Aorta (tissue), 5 donors: ENCODE measurements at regions of chr1 and their contacts with region 1.

Region 1: GRCh38 chr1:78114034-78114956 is 68.5 kb downstream of the GIPC2 start:
- DNase-seq: no peak
- ATAC-seq: peak; percentile 84
- H3K4me3 ChIP-seq: no peak overlapping the region
- H3K27ac ChIP-seq: no peak overlapping the region
- H3K4me1 ChIP-seq: peaks cover 0 to 2% of the 10 kb centered on the region in 2 donors
- H3K27me3 ChIP-seq: no peaks in the 10 kb centered on the region

Region 2: DNA sequence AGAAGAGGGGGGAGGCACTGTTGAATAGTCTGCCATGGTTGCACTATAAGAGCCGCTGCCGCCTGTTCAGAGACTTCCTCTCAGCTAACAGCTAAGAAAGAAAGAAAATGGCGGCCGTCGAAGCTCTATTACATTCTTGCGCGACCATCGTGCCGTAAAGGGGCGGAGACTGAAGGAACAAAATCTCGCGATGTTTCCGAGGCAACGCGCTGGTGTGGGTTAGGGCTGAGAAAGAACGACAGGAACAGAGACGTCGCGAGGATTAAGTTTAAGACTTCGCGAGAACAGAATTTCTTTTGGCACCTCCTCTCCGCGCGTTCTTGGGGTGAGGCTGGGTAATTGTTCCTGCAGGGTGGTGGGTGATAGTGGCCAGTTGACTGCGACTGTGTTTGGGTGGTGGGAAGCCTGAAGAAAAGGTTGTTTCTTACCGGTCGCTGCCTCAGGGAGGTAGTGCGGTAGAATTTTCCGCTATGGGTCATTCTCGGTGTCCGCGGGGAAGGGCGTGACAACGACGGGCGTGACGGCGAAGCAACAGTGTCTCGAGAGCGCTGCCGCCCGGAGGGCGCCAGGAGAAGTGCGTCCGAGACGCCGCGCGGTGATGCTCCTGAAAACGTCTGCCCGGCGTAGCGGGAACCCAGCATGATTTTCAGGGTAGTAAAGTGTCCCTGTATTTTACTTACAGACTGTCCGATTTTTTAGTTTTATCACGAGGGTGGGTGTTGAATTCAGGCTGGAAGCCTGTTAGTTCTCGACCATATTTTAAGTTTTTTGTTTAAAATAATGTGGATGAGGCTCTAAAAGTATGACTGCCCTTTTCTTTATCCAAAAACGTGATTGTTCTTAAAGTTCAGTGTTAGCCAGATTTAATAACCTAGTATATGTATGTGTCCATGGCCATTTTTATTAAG is 135.1 kb before region 1 on chr1 and contains the start of gene FUBP1:
- intact Hi-C with region 1: loop called (anchors 5 kb)
- DNase-seq: peak; percentile 96
- ATAC-seq: peak; percentile 98
- H3K4me3 ChIP-seq: peak within 1 kb of the TSS; percentile 96 to 100
- H3K27ac ChIP-seq: peak within 1 kb of the TSS; percentile 99
- H3K4me1 ChIP-seq: no peaks in the 10 kb centered on the region
- H3K27me3 ChIP-seq: no peaks in the 10 kb centered on the region
- total RNA-seq, gene FUBP1: 101 to 142 TPM

Region 3: DNA sequence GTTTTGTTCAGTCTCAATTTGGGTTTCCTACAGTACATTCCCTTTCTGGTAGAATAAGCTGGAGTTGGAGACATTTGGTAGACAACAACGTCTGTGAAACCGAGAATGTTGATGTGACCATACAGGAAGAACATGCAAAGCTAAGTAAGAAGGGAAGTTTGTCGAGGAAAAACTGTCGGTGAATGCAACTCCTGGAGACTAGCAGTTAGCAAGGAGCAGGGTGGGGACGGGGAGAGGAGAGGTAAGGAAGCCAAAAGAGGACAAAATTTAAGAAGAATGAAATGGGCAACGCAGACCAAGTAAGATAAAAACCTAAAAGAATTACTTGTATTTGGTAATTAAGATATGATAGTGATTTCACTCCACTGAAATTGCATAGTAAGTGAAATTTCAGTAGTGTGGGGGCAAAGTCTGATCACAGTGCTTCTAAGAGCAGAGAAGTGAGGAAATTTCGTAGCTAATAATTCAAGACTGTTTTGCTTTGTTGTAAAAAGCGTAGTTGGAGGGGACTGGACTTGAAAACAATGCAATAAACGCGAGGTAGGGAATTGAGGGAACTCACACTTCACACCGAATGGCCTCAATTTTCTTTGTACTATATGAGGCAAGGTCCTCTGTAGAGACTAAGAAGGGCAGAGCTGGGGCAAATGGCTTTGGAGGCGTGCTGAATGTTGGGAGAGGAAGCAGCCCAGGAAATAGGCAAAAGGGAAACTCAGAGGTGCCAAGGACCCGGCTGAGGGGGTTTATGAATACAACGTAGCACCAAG is 69.3 kb before region 1 on chr1:
- intact Hi-C with region 1: loop called in 1 of 2 experiments (anchors 5 kb)
- DNase-seq: no peak
- ATAC-seq: peak; percentile 31
- H3K4me3 ChIP-seq: no peak overlapping the region
- H3K27ac ChIP-seq: no peak overlapping the region
- H3K4me1 ChIP-seq: no peaks in the 10 kb centered on the region
- H3K27me3 ChIP-seq: no peaks in the 10 kb centered on the region